Psoas muscle (tissue), 8 donors: ENCODE measurements at regions of chr18 and their contacts with region 1.

Region 1: GRCh38 chr18:74230922-74231714 is 60.6 kb downstream of the CYB5A start:
- DNase-seq: no peak
- ATAC-seq: no peak
- H3K4me3 ChIP-seq: no peak overlapping the region
- H3K27ac ChIP-seq: no peak overlapping the region
- H3K4me1 ChIP-seq: no peaks in the 10 kb centered on the region
- H3K27me3 ChIP-seq: no peaks in the 10 kb centered on the region
- CTCF ChIP-seq: no peak

Region 2: GRCh38 chr18:73835656-73836364 is 395.3 kb before region 1 on chr18:
- intact Hi-C with region 1: no loop called
- DNase-seq: no peak
- ATAC-seq: no peak
- H3K4me3 ChIP-seq: no peak overlapping the region
- H3K27ac ChIP-seq: no peak overlapping the region
- H3K4me1 ChIP-seq: no peaks in the 10 kb centered on the region
- H3K27me3 ChIP-seq: no peaks in the 10 kb centered on the region
- CTCF ChIP-seq: no peak

Region 3: DNA sequence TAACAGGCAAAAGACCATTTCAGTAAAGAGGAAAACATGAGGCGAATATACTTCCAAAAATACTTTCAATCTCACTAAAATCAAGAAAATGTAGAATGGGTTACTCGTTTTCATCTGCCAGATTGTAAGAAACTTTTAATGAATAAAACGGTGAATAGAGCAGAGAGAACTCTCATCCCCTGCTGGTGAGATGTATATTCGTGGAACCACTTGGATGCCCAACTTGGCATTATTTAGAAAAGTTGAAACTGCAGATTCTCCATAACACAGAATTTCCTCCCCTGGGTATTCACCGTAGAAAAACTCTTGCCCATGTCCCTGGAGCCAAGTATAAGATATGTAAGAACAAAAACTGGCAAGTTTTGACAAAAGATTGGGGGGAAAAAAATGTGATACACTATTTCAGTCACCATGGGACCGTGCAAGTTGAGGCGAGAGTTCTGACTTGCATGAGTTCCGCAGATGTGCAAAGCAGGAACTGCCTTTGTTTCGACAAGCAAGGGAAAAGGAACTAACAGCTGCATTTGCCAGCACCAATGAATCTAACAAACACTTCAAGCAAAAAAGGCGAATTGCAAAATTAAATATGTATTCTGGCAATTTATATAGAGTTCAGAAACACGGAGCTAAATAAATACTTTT is 68.0 kb before region 1 on chr18:
- intact Hi-C with region 1: no loop called
- DNase-seq: no peak
- ATAC-seq: no peak
- H3K4me3 ChIP-seq: no peak overlapping the region
- H3K27ac ChIP-seq: no peak overlapping the region
- H3K4me1 ChIP-seq: no peaks in the 10 kb centered on the region
- H3K27me3 ChIP-seq: no peaks in the 10 kb centered on the region
- CTCF ChIP-seq: no peak

Region 4: GRCh38 chr18:74251297-74252038 is 20.4 kb after region 1 on chr18:
- intact Hi-C with region 1: loop called in 1 of 2 experiments (anchors 2 kb)
- DNase-seq: no peak
- ATAC-seq: peak in 1 of 4 donors; percentile 33
- H3K4me3 ChIP-seq: no peak overlapping the region
- H3K27ac ChIP-seq: no peak overlapping the region
- H3K4me1 ChIP-seq: peaks cover 8% of the 10 kb centered on the region
- H3K27me3 ChIP-seq: no peaks in the 10 kb centered on the region
- CTCF ChIP-seq: no peak